Activated CD4-positive, alpha-beta memory T cell treated with anti-CD3 and anti-CD28 coated beads for 36 hours (primary cell): ENCODE measurements at regions of chr6 and their contacts with region 1.

Region 1: DNA sequence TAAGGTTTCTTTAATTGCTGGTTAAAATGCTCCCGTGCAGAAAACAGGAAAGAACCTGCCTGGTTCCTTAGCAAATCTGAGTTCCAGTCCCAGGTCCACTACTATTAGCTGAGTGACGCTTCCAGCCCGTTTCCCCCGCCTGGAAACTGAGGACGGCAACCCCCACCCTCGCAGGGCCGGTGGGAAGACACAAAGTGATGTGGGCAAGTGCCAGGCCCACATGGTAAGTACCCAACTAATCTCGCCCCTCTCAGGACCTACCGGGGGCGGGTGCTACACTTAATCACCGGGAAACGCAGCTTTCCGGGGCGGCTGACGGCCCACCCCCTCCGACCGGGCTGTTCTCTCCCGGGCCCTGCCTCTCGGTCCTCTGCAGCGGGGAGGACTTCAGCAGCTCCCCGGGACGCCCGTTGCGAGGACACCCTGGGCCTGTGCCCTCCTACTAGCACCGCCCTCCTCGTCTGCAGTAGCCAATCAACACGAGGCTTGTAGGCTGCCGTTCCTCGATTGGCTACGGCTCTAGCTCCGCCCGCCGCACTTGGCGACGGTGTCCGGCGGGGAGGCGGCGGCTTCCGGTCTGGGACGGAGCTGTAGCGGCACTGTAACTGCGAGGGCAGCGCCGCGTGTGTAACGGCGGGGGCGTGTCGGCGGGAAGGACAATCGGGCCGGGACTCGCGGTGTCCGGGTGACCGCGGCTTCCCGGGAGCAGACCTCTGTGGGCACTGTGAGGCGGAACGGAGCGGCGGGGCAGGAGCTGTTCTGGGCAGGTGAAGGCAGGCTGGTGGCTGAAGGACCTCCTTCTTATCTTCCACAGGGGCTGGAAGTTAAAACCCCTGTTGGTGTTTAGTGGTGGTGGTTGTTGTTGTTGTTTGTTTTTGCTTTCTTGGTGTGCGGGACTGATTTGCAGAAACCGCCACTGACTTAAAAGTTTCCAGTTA is at the start of gene ZBTB9:
- DNase-seq: peak; percentile 97
- H3K4me3 Mint-ChIP-seq: peak within 1 kb of the TSS; percentile 92
- H3K27ac Mint-ChIP-seq: peak within 1 kb of the TSS; percentile 74
- H3K4me1 Mint-ChIP-seq: peaks cover 34% of the 10 kb centered on the region
- H3K27me3 Mint-ChIP-seq: no peaks in the 10 kb centered on the region
- total RNA-seq, gene ZBTB9: 9.7 to 10.1 TPM

Region 2: GRCh38 chr6:33430991-33431879 is 23.0 kb before region 1 on chr6:
- CTCF ChIA-PET with region 1: interaction called, 7 read pairs
- POLR2A ChIA-PET with region 1: interaction called, 13 read pairs
- intact Hi-C with region 1: loop called (anchors 2 kb)
- DNase-seq: peak; percentile 88
- H3K4me3 Mint-ChIP-seq: peak overlapping the region; percentile 26
- H3K27ac Mint-ChIP-seq: peak overlapping the region; percentile 87
- H3K4me1 Mint-ChIP-seq: peaks cover 52% of the 10 kb centered on the region
- H3K27me3 Mint-ChIP-seq: no peaks in the 10 kb centered on the region

Region 3: GRCh38 chr6:33570806-33571636 is 116.7 kb after region 1 on chr6:
- CTCF ChIA-PET with region 1: interaction called, 6 read pairs
- POLR2A ChIA-PET with region 1: interaction called, 8 read pairs
- intact Hi-C with region 1: loop called (anchors 2 kb)
- DNase-seq: peak; percentile 97
- H3K4me3 Mint-ChIP-seq: peak overlapping the region; percentile 82
- H3K27ac Mint-ChIP-seq: peak overlapping the region; percentile 99
- H3K4me1 Mint-ChIP-seq: peaks cover 41% of the 10 kb centered on the region
- H3K27me3 Mint-ChIP-seq: no peaks in the 10 kb centered on the region

Region 4: DNA sequence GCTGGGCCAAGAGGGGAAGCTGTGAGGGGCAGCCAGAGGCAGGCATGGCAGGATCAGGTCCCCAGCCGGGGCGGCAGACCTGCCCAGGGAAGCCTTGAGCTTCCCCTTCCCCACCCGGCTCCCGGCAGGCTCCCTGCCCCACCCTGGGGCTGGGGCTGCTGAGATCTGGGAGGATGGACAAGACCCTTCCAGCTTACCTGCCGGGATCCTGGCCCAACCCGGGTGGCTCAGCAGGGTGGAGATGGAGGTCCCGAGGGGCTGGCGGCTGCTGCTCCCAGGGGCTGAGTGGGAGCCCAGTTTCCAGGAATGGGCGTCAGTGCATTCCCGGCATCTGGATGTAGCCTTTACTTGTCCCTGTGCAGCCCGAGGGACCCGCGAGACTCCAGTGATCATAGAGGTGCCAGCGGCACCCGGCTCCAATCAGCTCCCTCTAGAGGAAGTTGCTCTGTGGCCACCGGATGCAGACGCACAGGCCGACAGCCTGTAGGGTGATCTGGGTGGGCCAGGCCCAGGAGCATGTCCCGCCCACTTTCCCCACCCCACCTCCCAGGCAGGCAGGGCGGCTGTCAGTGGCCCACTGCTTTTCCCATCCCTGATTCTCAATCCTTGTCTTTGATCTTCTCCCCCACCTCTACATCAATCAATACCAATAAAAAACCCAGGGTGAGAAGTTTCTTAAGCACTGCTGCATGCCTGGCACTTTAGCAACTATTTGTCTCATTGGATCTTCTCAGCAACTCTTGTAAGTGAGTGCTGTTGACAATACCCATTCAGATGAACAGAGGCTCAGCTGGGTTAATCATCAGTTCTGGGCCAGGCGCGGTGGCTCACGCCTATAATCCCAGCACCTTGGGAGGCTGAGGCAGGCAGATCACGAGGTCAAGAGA is 125.8 kb after region 1 on chr6 and contains the start of gene BAK1:
- CTCF ChIA-PET with region 1: interaction called, 7 read pairs
- POLR2A ChIA-PET with region 1: no interaction called
- intact Hi-C with region 1: loop called (anchors 1 kb)
- DNase-seq: peak; percentile 93
- H3K4me3 Mint-ChIP-seq: peak within 1 kb of the TSS; percentile 96
- H3K27ac Mint-ChIP-seq: peak within 1 kb of the TSS; percentile 98
- H3K4me1 Mint-ChIP-seq: peaks cover 33% of the 10 kb centered on the region
- H3K27me3 Mint-ChIP-seq: no peaks in the 10 kb centered on the region
- total RNA-seq, gene BAK1: 56.3 to 57.7 TPM

Region 5: DNA sequence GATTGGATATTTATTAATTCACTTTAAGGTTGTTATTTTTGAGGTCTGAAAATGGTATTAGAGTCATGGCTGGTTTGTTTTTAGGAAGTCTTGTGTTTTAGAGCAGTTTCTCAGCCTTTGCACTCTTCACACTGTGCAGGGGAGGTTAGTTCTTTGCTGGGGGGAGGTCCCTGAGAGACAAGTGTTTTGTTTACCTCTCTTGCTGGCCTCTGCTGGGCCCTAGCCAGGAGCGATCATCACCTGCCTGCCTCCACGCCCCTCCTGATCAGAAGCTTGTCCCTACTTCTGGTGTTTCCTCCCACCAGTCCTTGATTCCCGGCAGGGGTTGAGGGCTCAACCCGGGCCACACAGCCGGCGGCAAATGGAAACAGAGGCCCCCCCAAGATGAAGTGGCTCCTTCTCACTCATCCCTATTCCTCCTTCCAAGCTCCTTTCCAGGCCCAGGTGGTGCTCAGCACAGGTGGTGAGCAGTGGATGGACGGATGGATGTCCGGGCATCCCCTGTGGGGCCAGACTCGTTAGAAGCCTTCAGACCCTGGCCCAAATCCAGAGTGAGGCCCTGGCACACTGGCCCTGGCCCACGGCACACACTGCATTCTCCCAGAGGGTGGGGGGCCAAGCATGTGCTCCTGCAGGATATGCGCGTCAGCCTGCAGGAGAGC is 640.3 kb after region 1 on chr6:
- CTCF ChIA-PET with region 1: no interaction called
- POLR2A ChIA-PET with region 1: no interaction called
- intact Hi-C with region 1: no loop called
- DNase-seq: no peak
- H3K4me3 Mint-ChIP-seq: no peak overlapping the region
- H3K27ac Mint-ChIP-seq: no peak overlapping the region
- H3K4me1 Mint-ChIP-seq: no peaks in the 10 kb centered on the region
- H3K27me3 Mint-ChIP-seq: peaks cover 27% of the 10 kb centered on the region